Uterus (tissue), 4 donors: ENCODE measurements at regions of chr2 and their contacts with region 1.

Region 1: GRCh38 chr2:127324635-127325034 is 30.7 kb upstream of the ERCC3 start:
- DNase-seq: no peak
- H3K4me3 ChIP-seq: no peak overlapping the region
- H3K27ac ChIP-seq: no peak overlapping the region
- H3K4me1 ChIP-seq: no peaks in the 10 kb centered on the region
- H3K27me3 ChIP-seq: no peaks in the 10 kb centered on the region
- CTCF ChIP-seq: peak; percentile 54 to 66 (median 61)
- POLR2A ChIP-seq: no peak

Region 2: GRCh38 chr2:127270636-127271035 is 54.0 kb before region 1 on chr2:
- intact Hi-C with region 1: no loop called
- DNase-seq: no peak
- H3K4me3 ChIP-seq: no peak overlapping the region
- H3K27ac ChIP-seq: no peak overlapping the region
- H3K4me1 ChIP-seq: no peaks in the 10 kb centered on the region
- H3K27me3 ChIP-seq: no peaks in the 10 kb centered on the region
- CTCF ChIP-seq: no peak
- POLR2A ChIP-seq: no peak

Region 3: GRCh38 chr2:127479219-127479825 is 154.7 kb after region 1 on chr2:
- intact Hi-C with region 1: loop called (anchors 10 kb)
- DNase-seq: no peak
- H3K4me3 ChIP-seq: no peak overlapping the region
- H3K27ac ChIP-seq: no peak overlapping the region
- H3K4me1 ChIP-seq: no peaks in the 10 kb centered on the region
- H3K27me3 ChIP-seq: no peaks in the 10 kb centered on the region
- CTCF ChIP-seq: peak; percentile 63 to 71 (median 68)
- POLR2A ChIP-seq: no peak